B cell (primary cell): ENCODE measurements at regions of chr6 and their contacts with region 1.

Region 1: DNA sequence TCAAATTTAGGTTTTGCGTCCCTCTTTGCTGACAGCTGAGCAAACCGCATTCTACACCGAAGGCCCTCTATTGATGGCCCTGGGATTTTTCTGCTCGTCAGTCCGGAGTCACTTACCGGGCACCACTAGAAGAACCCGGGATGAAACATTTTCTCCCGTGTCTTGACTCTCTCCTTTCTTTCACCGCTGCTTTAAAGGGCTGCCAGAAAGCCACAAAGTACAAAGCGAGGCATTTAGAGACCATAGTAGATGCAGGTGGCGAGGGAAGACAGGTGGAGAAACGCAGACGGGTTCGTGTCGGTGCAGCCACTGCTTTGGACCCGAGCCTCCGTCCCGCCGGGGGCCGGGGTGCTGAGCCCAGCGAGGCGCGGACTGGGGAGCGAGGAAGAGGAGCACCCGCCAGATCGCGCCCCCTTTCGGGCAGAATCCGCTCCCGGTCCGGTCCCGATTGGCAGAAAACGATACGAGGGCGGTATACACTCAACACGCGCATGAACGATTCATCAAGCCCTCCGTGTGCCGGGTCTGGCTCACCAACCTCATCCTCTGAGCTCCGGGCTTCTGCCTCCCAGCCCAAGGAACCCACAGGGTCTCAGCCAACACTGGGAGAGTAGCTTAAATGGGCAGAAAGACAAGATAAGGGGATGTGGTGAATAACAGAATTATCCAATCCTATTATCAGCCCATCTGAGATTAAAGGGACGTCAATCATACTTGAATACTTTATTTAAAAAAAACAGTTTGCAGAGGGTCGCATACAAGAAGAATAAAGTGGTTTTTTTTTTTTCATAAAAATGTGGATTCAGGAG is 84.9 kb downstream of the TRIM27 start:
- DNase-seq: peak; percentile 86
- ATAC-seq: peak; percentile 74
- H3K4me3 ChIP-seq: peak overlapping the region; percentile 62 to 87 (median 68)
- H3K4me3 Mint-ChIP-seq: peak overlapping the region; percentile 90
- H3K27ac ChIP-seq: peak overlapping the region; percentile 19 to 55
- H3K27ac Mint-ChIP-seq: peak overlapping the region; percentile 92
- H3K4me1 ChIP-seq: peaks cover 11 to 19% of the 10 kb centered on the region in 2 donors
- H3K4me1 Mint-ChIP-seq: peaks cover 24% of the 10 kb centered on the region
- H3K27me3 ChIP-seq: peaks cover 0 to 25% (median 12%) of the 10 kb centered on the region in 4 experiments
- H3K27me3 Mint-ChIP-seq: peaks cover 30% of the 10 kb centered on the region
- CTCF ChIP-seq: peak; percentile 60

Region 2: GRCh38 chr6:27472617-27473400 is 1366.0 kb before region 1 on chr6 and contains the start of gene ZNF184:
- CTCF ChIA-PET with region 1: no interaction called
- POLR2A ChIA-PET with region 1: no interaction called
- intact Hi-C with region 1: loop called (anchors 10 kb)
- DNase-seq: peak; percentile 96
- ATAC-seq: peak; percentile 92
- H3K4me3 ChIP-seq: peak within 1 kb of the TSS; percentile 75 to 93 (median 83)
- H3K4me3 Mint-ChIP-seq: peak within 1 kb of the TSS; percentile 100
- H3K27ac ChIP-seq: peak within 1 kb of the TSS; percentile 89 to 97
- H3K27ac Mint-ChIP-seq: peak within 1 kb of the TSS; percentile 99
- H3K4me1 ChIP-seq: peaks cover 16 to 22% of the 10 kb centered on the region in 2 donors
- H3K4me1 Mint-ChIP-seq: peaks cover 44% of the 10 kb centered on the region
- H3K27me3 ChIP-seq: no peaks in the 10 kb centered on the region
- H3K27me3 Mint-ChIP-seq: no peaks in the 10 kb centered on the region
- CTCF ChIP-seq: peak; percentile 31
- total RNA-seq, gene ZNF184: 11.8 TPM in 2 replicates

Region 3: GRCh38 chr6:28824793-28825731 is 13.8 kb before region 1 on chr6:
- CTCF ChIA-PET with region 1: interaction called, 14 read pairs
- POLR2A ChIA-PET with region 1: no interaction called
- intact Hi-C with region 1: no loop called
- DNase-seq: peak; percentile 36
- ATAC-seq: no peak
- H3K4me3 ChIP-seq: no peak overlapping the region
- H3K4me3 Mint-ChIP-seq: peak overlapping the region; percentile 46
- H3K27ac ChIP-seq: no peak overlapping the region
- H3K27ac Mint-ChIP-seq: no peak overlapping the region
- H3K4me1 ChIP-seq: peaks cover 0 to 10% of the 10 kb centered on the region in 2 donors
- H3K4me1 Mint-ChIP-seq: peaks cover 10% of the 10 kb centered on the region
- H3K27me3 ChIP-seq: peaks cover 0 to 56% (median 54%) of the 10 kb centered on the region in 4 experiments
- H3K27me3 Mint-ChIP-seq: peaks cover 66% of the 10 kb centered on the region
- CTCF ChIP-seq: no peak

Region 4: DNA sequence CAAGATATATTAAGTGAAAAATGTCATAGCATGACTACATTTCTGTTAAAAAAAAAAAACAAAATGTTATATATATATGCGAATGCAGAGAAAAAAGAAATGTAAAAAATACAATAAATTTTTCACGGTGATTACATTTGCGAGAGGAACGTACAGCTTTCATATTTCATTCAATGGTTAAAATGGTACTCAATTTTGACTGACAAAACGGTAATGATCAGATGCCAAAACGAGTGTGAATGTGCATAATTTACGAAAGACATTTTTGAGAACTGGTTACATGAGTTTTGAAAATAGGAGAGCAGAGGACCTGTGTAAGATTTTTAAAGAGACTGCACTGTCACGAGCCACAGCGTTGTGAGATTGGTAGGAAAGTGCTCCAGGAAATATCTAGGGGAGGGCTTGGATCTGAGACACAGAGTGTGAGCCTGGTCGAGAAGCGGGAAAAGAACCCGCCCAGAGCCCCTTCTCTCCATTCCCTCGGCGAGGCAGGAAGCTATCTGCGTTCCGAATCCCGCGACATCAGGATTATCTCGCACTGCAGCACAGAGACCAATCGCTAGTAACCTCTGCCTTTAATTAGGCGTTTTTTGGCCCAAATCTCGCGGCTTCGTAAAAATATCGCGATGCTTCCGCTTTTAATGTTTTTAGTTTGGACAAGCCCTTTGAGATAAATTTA is 56.4 kb after region 1 on chr6:
- CTCF ChIA-PET with region 1: interaction called, 13 read pairs
- POLR2A ChIA-PET with region 1: no interaction called
- intact Hi-C with region 1: loop called (anchors 1 kb)
- DNase-seq: peak; percentile 96
- ATAC-seq: peak; percentile 58
- H3K4me3 ChIP-seq: peak overlapping the region; percentile 73 to 86 (median 83)
- H3K4me3 Mint-ChIP-seq: peak overlapping the region; percentile 99
- H3K27ac ChIP-seq: peak overlapping the region; percentile 97
- H3K27ac Mint-ChIP-seq: peak overlapping the region; percentile 100
- H3K4me1 ChIP-seq: peaks cover 7 to 12% of the 10 kb centered on the region in 2 donors
- H3K4me1 Mint-ChIP-seq: peaks cover 21% of the 10 kb centered on the region
- H3K27me3 ChIP-seq: no peaks in the 10 kb centered on the region
- H3K27me3 Mint-ChIP-seq: peaks cover 4% of the 10 kb centered on the region
- CTCF ChIP-seq: no peak

Region 5: GRCh38 chr6:28940858-28941680 is 102.2 kb after region 1 on chr6:
- CTCF ChIA-PET with region 1: interaction called, 19 read pairs
- POLR2A ChIA-PET with region 1: no interaction called
- intact Hi-C with region 1: loop called (anchors 1 kb)
- DNase-seq: peak; percentile 90
- ATAC-seq: peak; percentile 70
- H3K4me3 ChIP-seq: peak overlapping the region; percentile 55 to 99 (median 83)
- H3K4me3 Mint-ChIP-seq: peak overlapping the region; percentile 95
- H3K27ac ChIP-seq: peak overlapping the region; percentile 46 to 69
- H3K27ac Mint-ChIP-seq: peak overlapping the region; percentile 92
- H3K4me1 ChIP-seq: peaks cover 29 to 39% of the 10 kb centered on the region in 2 donors
- H3K4me1 Mint-ChIP-seq: peaks cover 44% of the 10 kb centered on the region
- H3K27me3 ChIP-seq: peaks cover 0 to 4% (median 0%) of the 10 kb centered on the region in 4 experiments
- H3K27me3 Mint-ChIP-seq: no peaks in the 10 kb centered on the region
- CTCF ChIP-seq: no peak

Region 6: GRCh38 chr6:28988536-28989311 is 149.9 kb after region 1 on chr6:
- CTCF ChIA-PET with region 1: interaction called, 5 read pairs
- POLR2A ChIA-PET with region 1: no interaction called
- intact Hi-C with region 1: loop called (anchors 1 kb)
- DNase-seq: peak; percentile 87
- ATAC-seq: peak; percentile 79
- H3K4me3 ChIP-seq: peak overlapping the region in 3 of 5 experiments; percentile 2 to 32 (median 29)
- H3K4me3 Mint-ChIP-seq: peak overlapping the region; percentile 59
- H3K27ac ChIP-seq: no peak overlapping the region
- H3K27ac Mint-ChIP-seq: peak overlapping the region; percentile 46
- H3K4me1 ChIP-seq: peaks cover 15 to 18% of the 10 kb centered on the region in 2 donors
- H3K4me1 Mint-ChIP-seq: peaks cover 23% of the 10 kb centered on the region
- H3K27me3 ChIP-seq: peaks cover 0 to 42% (median 15%) of the 10 kb centered on the region in 4 experiments
- H3K27me3 Mint-ChIP-seq: peaks cover 42% of the 10 kb centered on the region
- CTCF ChIP-seq: peak; percentile 71

Region 7: DNA sequence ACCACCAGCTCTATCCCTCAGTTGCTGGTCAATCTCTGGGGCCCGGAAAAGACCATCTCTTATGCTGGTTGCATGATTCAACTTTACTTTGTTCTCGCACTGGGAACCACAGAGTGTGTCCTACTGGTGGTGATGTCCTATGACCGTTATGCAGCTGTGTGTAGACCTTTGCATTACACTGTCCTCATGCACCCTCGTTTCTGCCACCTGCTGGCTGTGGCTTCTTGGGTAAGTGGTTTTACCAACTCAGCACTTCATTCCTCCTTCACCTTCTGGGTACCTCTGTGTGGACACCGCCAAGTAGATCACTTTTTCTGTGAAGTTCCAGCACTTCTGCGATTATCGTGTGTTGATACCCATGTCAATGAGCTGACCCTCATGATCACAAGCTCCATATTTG is 273.3 kb after region 1 on chr6:
- CTCF ChIA-PET with region 1: no interaction called
- POLR2A ChIA-PET with region 1: no interaction called
- intact Hi-C with region 1: loop called (anchors 2 kb)
- DNase-seq: no peak
- ATAC-seq: no peak
- H3K4me3 ChIP-seq: no peak overlapping the region
- H3K4me3 Mint-ChIP-seq: no peak overlapping the region
- H3K27ac ChIP-seq: no peak overlapping the region
- H3K27ac Mint-ChIP-seq: no peak overlapping the region
- H3K4me1 ChIP-seq: no peaks in the 10 kb centered on the region
- H3K4me1 Mint-ChIP-seq: no peaks in the 10 kb centered on the region
- H3K27me3 ChIP-seq: peaks cover 0 to 7% (median 3%) of the 10 kb centered on the region in 4 experiments
- H3K27me3 Mint-ChIP-seq: peaks cover 28% of the 10 kb centered on the region
- CTCF ChIP-seq: no peak